Activated CD4-positive, alpha-beta T cell treated with anti-CD3 and anti-CD28 coated beads, Interleukin-2, amount 10 ng/mL, durations not matched to agents 24 days and 14 days (primary cell): ENCODE measurements at regions of chr5 and their contacts with region 1.

Region 1: GRCh38 chr5:37722236-37723146 is 117.3 kb downstream of the GDNF start:
- DNase-seq: peak; percentile 83
- H3K4me3 Mint-ChIP-seq: peak overlapping the region; percentile 81
- H3K27ac Mint-ChIP-seq: peak overlapping the region; percentile 95
- H3K4me1 Mint-ChIP-seq: peaks cover 29% of the 10 kb centered on the region
- H3K27me3 Mint-ChIP-seq: no peaks in the 10 kb centered on the region

Region 2: DNA sequence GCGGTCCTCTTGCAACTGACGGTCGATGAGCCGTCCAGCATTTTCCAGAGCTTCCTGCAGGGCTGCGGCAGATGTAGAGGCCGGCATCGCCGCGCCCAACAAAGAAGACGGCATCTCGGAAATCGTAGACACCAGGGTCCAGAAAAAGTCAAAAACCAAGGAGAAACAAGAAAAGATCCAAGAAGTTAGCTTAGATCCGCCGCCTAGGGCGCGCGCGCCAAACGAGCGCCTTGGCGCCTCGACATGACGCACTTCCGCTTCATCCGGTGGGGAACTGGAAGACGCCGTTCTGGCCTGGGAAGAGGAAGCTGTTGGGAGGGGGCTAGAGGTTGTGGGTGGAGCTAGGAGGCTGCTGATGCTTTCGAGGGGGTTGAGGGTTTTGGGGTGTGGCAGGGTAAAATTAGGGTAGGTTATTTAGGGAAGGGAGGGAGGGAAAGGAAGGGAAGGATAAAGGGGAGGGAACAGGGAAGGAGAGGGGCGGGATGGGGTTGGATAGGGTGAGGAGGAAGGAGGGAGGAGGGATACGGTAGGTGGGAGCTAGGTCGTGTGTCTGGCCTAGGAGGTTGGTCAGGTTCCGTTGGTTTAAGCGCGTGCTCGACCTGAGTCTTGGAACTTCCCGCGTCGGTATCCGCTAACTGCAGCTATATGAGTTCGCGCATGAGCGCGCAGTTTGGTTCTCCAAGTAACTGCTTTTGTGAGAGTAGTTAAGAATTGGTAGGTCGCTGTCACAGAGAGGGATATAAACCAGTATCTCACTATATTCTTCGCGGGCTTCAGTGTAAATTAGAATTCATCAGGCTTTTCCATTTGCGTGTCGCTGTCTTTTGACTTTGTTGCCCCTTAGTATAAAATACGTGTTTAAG is 351.4 kb before region 1 on chr5 and contains the start of gene NUP155:
- intact Hi-C with region 1: loop called (anchors 2 kb)
- DNase-seq: peak; percentile 97
- H3K4me3 Mint-ChIP-seq: peak within 1 kb of the TSS; percentile 91
- H3K27ac Mint-ChIP-seq: peak within 1 kb of the TSS; percentile 95
- H3K4me1 Mint-ChIP-seq: peaks cover 23% of the 10 kb centered on the region
- H3K27me3 Mint-ChIP-seq: no peaks in the 10 kb centered on the region
- total RNA-seq, gene NUP155: 85.1 and 86.2 TPM in 2 replicates

Region 3: GRCh38 chr5:37448941-37449340 is 273.6 kb before region 1 on chr5:
- intact Hi-C with region 1: loop called (anchors 5 kb)
- DNase-seq: no peak
- H3K4me3 Mint-ChIP-seq: no peak overlapping the region
- H3K27ac Mint-ChIP-seq: no peak overlapping the region
- H3K4me1 Mint-ChIP-seq: no peaks in the 10 kb centered on the region
- H3K27me3 Mint-ChIP-seq: no peaks in the 10 kb centered on the region

Region 4: DNA sequence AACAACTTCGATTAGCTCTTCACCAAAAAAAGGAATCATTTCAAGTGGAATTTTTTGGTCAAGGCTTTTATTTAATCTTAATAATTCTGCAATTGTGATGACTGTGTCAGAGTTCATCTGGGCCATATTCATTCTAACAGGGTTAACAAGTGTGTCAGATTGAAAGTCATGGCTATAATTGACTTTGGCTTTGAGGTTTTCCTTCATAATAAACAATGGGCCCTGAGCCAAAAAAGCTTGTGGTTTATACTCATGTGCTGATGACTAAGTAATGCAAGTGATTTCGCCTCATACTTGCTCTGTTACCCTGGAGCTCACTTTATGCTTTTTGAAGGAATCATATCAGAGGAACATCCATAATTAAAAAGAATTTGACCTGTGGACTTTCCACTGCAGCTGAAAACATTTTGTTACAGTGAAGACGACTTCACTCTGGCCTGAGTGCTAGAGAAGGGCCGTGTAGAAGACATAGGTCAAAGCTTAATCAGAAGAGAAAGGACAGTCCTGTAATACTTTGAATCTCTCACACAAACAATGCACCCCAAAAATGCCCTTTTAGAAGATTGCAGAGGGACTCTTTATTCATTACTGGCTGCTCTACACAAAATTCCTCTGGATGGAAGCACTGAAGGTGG is 15.7 kb after region 1 on chr5:
- intact Hi-C with region 1: loop called (anchors 1 kb)
- DNase-seq: peak; percentile 75
- H3K4me3 Mint-ChIP-seq: peak overlapping the region; percentile 62
- H3K27ac Mint-ChIP-seq: peak overlapping the region; percentile 85
- H3K4me1 Mint-ChIP-seq: peaks cover 26% of the 10 kb centered on the region
- H3K27me3 Mint-ChIP-seq: no peaks in the 10 kb centered on the region

Region 5: GRCh38 chr5:38008198-38008597 is 285.7 kb after region 1 on chr5:
- intact Hi-C with region 1: no loop called
- DNase-seq: no peak
- H3K4me3 Mint-ChIP-seq: no peak overlapping the region
- H3K27ac Mint-ChIP-seq: no peak overlapping the region
- H3K4me1 Mint-ChIP-seq: no peaks in the 10 kb centered on the region
- H3K27me3 Mint-ChIP-seq: no peaks in the 10 kb centered on the region

Region 6: DNA sequence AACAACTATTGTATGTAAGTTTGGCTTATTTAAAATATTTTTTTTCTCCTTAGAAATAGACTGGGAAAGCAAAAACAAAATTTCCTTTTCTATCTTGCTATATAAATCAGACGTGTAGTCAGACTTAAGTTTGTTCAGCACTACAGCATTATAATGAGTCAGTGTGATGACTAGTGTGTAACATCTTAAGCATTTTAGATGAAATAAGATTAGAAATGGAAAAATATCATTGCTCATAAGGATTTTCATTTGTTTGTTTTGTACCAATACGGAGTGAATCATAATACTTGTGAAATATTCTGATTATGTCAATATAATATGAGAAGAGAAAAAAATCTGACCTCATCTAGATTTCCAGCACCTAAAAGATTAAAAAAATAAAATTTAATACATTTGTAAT is 1416.4 kb after region 1 on chr5:
- intact Hi-C with region 1: no loop called
- DNase-seq: no peak
- H3K4me3 Mint-ChIP-seq: no peak overlapping the region
- H3K27ac Mint-ChIP-seq: no peak overlapping the region
- H3K4me1 Mint-ChIP-seq: peaks cover 7% of the 10 kb centered on the region
- H3K27me3 Mint-ChIP-seq: no peaks in the 10 kb centered on the region